ENCODE measurements at regions of chr17 and their contacts with region 1.

Region 1: GRCh38 chr17:14427900-14428647 is 127.2 kb downstream of the HS3ST3B1 start:
- DNase-seq: peak; percentile 70
- H3K4me3 Mint-ChIP-seq: peak overlapping the region; percentile 67
- H3K27ac Mint-ChIP-seq: peak overlapping the region; percentile 90
- H3K4me1 Mint-ChIP-seq: peaks cover 57% of the 10 kb centered on the region
- H3K27me3 Mint-ChIP-seq: no peaks in the 10 kb centered on the region

Region 2: DNA sequence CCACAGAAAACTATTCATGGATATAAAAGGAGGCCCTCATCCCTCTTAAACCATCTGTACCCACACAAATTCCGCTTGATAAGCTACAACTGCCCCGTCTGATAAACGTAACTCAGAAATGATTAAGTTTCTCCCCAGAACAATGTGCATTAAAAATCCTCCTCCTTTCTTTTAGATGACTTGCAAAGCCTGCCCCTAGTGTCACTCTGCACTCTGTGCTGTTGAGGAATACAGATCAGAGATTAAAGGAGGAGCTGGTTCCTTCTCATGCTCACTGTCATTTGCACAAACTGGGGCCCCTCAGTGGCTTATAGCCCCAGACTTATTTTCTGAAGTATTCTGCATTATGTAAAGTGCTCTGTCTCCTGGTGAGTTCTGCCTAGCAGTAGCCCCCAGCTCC is 224.7 kb before region 1 on chr17:
- CTCF ChIA-PET with region 1: no interaction called
- POLR2A ChIA-PET with region 1: no interaction called
- intact Hi-C with region 1: loop called (anchors 10 kb)
- DNase-seq: peak; percentile 60
- H3K4me3 Mint-ChIP-seq: no peak overlapping the region
- H3K27ac Mint-ChIP-seq: peak overlapping the region; percentile 77
- H3K4me1 Mint-ChIP-seq: peaks cover 85% of the 10 kb centered on the region
- H3K27me3 Mint-ChIP-seq: no peaks in the 10 kb centered on the region

Region 3: GRCh38 chr17:14308965-14309879 is 118.9 kb before region 1 on chr17:
- CTCF ChIA-PET with region 1: no interaction called
- POLR2A ChIA-PET with region 1: no interaction called
- intact Hi-C with region 1: loop called (anchors 1 kb)
- DNase-seq: peak; percentile 96
- H3K4me3 Mint-ChIP-seq: peak overlapping the region; percentile 77
- H3K27ac Mint-ChIP-seq: peak overlapping the region; percentile 69
- H3K4me1 Mint-ChIP-seq: peaks cover 76% of the 10 kb centered on the region
- H3K27me3 Mint-ChIP-seq: no peaks in the 10 kb centered on the region

Region 4: DNA sequence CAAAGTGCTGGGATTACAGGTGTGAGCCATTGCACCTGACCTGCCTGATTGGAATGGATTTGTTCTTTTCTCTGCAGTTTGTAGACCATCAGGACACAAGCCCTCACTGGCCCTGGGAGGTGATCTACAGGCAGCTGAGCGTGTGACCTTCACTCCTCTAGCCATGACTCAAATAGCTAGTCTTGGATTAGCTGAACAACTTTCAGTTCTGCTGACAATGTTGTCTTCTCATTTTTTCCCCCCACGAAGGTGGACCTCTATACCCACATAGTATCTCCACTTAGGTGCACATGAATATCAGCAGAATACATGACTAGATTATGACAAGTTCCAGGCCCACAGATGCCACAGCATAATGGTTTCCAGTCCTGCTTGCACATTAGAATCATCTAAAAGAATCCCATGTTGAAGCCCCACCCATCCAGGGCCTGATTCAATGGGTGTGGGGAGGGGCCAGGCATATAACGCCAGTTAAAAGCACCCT is 90.4 kb before region 1 on chr17:
- CTCF ChIA-PET with region 1: no interaction called
- POLR2A ChIA-PET with region 1: no interaction called
- intact Hi-C with region 1: loop called (anchors 1 kb)
- DNase-seq: peak; percentile 85
- H3K4me3 Mint-ChIP-seq: no peak overlapping the region
- H3K27ac Mint-ChIP-seq: peak overlapping the region; percentile 74
- H3K4me1 Mint-ChIP-seq: peaks cover 84% of the 10 kb centered on the region
- H3K27me3 Mint-ChIP-seq: no peaks in the 10 kb centered on the region

Region 5: GRCh38 chr17:14359163-14360020 is 68.7 kb before region 1 on chr17:
- CTCF ChIA-PET with region 1: no interaction called
- POLR2A ChIA-PET with region 1: interaction called, 5 read pairs
- intact Hi-C with region 1: loop called (anchors 5 kb)
- DNase-seq: peak; percentile 77
- H3K4me3 Mint-ChIP-seq: no peak overlapping the region
- H3K27ac Mint-ChIP-seq: no peak overlapping the region
- H3K4me1 Mint-ChIP-seq: peaks cover 13% of the 10 kb centered on the region
- H3K27me3 Mint-ChIP-seq: no peaks in the 10 kb centered on the region

Region 6: DNA sequence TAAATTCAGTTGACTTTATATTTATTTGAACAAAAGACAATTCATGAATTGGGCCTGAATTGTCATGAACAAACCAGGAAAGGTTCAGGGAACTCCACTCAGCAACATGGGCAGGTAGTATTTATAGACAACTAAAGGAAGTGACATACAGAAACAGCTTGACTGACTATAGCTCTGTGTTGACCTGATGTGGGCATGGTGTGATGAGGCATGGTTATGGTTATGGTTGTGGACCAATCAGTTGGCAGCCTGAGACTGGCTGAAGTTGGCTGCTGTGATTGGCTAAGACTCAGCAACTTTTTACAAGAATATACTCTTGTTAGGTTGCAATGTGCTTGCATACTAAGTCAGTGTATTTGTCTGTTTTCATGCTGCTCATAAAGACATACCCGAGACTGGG is 18.8 kb before region 1 on chr17:
- CTCF ChIA-PET with region 1: interaction called, 8 read pairs
- POLR2A ChIA-PET with region 1: no interaction called
- intact Hi-C with region 1: loop called (anchors 1 kb)
- DNase-seq: no peak
- H3K4me3 Mint-ChIP-seq: no peak overlapping the region
- H3K27ac Mint-ChIP-seq: no peak overlapping the region
- H3K4me1 Mint-ChIP-seq: peaks cover 15% of the 10 kb centered on the region
- H3K27me3 Mint-ChIP-seq: no peaks in the 10 kb centered on the region

Region 7: GRCh38 chr17:14460516-14461226 is 32.6 kb after region 1 on chr17:
- CTCF ChIA-PET with region 1: no interaction called
- POLR2A ChIA-PET with region 1: no interaction called
- intact Hi-C with region 1: loop called (anchors 2 kb)
- DNase-seq: no peak
- H3K4me3 Mint-ChIP-seq: no peak overlapping the region
- H3K27ac Mint-ChIP-seq: no peak overlapping the region
- H3K4me1 Mint-ChIP-seq: no peaks in the 10 kb centered on the region
- H3K27me3 Mint-ChIP-seq: no peaks in the 10 kb centered on the region

Region 8: GRCh38 chr17:14641117-14641516 is 213.0 kb after region 1 on chr17:
- CTCF ChIA-PET with region 1: no interaction called
- POLR2A ChIA-PET with region 1: no interaction called
- intact Hi-C with region 1: no loop called
- DNase-seq: no peak
- H3K4me3 Mint-ChIP-seq: no peak overlapping the region
- H3K27ac Mint-ChIP-seq: no peak overlapping the region
- H3K4me1 Mint-ChIP-seq: no peaks in the 10 kb centered on the region
- H3K27me3 Mint-ChIP-seq: peaks cover 8% of the 10 kb centered on the region